ENCODE measurements at regions of chr2 and their contacts with region 1.

Region 1: DNA sequence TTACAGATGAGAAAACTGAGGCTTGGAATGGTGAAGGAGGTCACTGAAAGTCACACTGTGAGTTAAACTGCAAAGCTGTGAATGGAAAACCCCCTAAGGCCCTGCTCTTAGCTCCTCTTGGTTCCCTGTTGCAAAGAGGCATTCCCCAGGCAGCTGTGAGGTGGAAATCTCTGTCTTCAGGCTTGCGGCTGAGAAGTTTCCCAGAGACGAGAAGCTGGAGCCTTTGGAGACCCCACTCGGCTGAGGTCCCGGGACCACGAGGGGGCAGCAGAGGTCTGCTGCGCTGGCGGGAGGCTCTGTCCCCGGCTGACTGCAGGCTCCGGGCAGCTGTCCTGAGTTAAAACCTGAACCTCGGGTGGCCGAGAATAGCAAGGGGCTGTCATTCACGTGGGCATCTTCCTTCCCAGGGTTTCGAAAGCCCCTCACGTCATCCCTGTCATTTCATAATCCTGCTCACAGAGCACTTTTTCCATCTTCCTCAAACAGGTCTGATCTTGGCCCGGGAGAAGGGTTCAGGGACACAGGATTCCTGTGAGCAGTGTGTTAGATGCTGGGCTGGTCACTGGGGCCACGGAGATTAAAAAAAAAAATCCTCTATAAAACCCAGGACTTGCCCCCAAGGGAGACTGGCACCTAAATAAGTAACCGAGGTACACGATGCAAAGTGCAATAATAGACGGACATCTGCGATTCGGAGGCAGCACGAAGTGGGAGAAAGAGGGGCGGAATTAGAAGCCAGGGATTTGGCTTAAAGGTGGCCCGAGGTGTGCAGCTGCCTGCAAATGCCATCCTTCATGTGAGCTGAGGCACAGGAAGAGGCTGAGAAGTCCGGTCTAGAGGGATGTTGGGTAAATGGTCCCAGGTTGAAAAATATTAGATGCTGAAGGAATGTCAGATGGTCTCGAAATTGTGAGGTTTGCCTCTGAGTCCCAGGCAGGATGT is 24.6 kb upstream of the ATOH8 start:
- DNase-seq: peak; percentile 87 to 94 (median 93)
- H3K4me3 ChIP-seq: no peak overlapping the region
- H3K27ac ChIP-seq: no peak overlapping the region
- H3K4me1 ChIP-seq: no peaks in the 10 kb centered on the region
- H3K27me3 ChIP-seq: no peaks in the 10 kb centered on the region
- CTCF ChIP-seq: peak; percentile 92 to 94 (median 94)
- EP300 ChIP-seq: no peak
- POLR2A ChIP-seq: peak; percentile 20

Region 2: GRCh38 chr2:85741833-85742455 is 12.8 kb after region 1 on chr2:
- intact Hi-C with region 1: no loop called
- DNase-seq: peak; percentile 75 to 84 (median 78)
- H3K4me3 ChIP-seq: no peak overlapping the region
- H3K27ac ChIP-seq: peak overlapping the region; percentile 51 to 89
- H3K4me1 ChIP-seq: peaks cover 33% of the 10 kb centered on the region
- H3K27me3 ChIP-seq: no peaks in the 10 kb centered on the region
- CTCF ChIP-seq: no peak
- EP300 ChIP-seq: no peak
- POLR2A ChIP-seq: no peak

Region 3: DNA sequence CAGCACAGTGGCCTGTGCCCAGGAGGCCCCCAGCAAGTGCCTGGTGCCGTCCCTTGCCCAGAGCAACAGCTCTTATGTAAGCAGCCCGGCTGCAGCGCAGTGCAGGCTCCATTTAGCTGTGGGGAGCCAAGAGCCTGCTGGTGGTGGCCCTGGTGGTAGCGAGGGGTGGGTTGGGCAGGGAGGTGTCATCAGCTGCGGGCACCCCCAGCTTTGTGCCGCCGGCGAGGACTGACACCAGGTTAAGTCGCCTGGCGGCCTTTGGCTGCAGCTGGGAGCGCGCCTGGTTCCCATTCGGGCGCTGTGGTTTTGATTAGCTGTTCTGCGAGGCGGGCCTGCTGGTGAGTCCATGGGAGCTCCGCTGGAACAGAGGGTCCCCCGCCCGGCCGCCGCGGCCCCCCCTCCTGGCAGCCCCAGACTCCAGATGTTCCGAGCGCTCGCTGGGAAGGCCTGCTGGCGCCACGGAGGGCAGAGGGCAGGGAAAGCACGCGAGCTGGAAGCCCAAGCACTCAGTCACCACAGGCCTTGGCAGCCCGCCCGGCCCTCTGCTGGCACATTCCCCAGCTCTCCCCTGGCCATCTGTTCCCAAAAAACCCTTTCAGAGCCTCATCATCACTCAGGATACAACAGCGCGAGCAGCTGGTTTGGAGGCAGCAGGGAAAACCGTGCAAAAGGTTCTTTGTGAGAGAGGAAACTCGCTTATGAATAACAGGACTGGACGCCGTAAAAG is 43.0 kb after region 1 on chr2:
- intact Hi-C with region 1: loop called in 1 of 4 experiments (anchors 5 kb)
- DNase-seq: peak; percentile 99 to 100 (median 100)
- H3K4me3 ChIP-seq: peak overlapping the region; percentile 24
- H3K27ac ChIP-seq: peak overlapping the region; percentile 36 to 84
- H3K4me1 ChIP-seq: peaks cover 53% of the 10 kb centered on the region
- H3K27me3 ChIP-seq: no peaks in the 10 kb centered on the region
- CTCF ChIP-seq: peak in 2 of 3 donors; percentile 37 to 56
- EP300 ChIP-seq: peak; percentile 93
- POLR2A ChIP-seq: peak; percentile 22

Region 4: DNA sequence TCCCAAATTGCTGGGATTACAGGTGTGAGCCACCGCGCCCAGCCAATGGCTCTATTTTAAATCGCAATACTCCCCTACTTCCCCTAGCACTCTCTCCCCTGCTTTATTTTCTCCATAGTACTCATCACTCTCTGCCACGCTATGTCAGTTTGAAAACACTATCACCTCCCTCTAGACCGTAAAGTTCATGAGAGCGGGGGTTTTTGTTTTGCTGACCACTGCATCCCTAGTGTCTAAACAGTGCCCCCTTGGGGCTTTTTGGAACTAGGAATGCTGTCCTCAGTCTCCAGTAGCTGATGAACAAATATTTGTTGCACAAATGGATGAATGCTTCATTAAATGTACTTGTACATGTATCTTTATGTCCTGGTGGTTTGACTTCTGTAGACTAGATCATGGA is 68.8 kb after region 1 on chr2:
- intact Hi-C with region 1: loop called in 2 of 4 experiments (anchors 2 to 5 kb)
- DNase-seq: peak in 1 of 5 donors; percentile 43
- H3K4me3 ChIP-seq: no peak overlapping the region
- H3K27ac ChIP-seq: no peak overlapping the region
- H3K4me1 ChIP-seq: peaks cover 30% of the 10 kb centered on the region
- H3K27me3 ChIP-seq: no peaks in the 10 kb centered on the region
- CTCF ChIP-seq: peak in 1 of 3 donors; percentile 67
- EP300 ChIP-seq: no peak
- POLR2A ChIP-seq: no peak

Region 5: GRCh38 chr2:85813982-85814801 is 85.0 kb after region 1 on chr2:
- intact Hi-C with region 1: loop called (anchors 1 to 5 kb)
- DNase-seq: peak; percentile 90 to 94 (median 94)
- H3K4me3 ChIP-seq: no peak overlapping the region
- H3K27ac ChIP-seq: no peak overlapping the region
- H3K4me1 ChIP-seq: peaks cover 9% of the 10 kb centered on the region
- H3K27me3 ChIP-seq: no peaks in the 10 kb centered on the region
- CTCF ChIP-seq: peak; percentile 86 to 97 (median 96)
- EP300 ChIP-seq: no peak
- POLR2A ChIP-seq: no peak

Region 6: DNA sequence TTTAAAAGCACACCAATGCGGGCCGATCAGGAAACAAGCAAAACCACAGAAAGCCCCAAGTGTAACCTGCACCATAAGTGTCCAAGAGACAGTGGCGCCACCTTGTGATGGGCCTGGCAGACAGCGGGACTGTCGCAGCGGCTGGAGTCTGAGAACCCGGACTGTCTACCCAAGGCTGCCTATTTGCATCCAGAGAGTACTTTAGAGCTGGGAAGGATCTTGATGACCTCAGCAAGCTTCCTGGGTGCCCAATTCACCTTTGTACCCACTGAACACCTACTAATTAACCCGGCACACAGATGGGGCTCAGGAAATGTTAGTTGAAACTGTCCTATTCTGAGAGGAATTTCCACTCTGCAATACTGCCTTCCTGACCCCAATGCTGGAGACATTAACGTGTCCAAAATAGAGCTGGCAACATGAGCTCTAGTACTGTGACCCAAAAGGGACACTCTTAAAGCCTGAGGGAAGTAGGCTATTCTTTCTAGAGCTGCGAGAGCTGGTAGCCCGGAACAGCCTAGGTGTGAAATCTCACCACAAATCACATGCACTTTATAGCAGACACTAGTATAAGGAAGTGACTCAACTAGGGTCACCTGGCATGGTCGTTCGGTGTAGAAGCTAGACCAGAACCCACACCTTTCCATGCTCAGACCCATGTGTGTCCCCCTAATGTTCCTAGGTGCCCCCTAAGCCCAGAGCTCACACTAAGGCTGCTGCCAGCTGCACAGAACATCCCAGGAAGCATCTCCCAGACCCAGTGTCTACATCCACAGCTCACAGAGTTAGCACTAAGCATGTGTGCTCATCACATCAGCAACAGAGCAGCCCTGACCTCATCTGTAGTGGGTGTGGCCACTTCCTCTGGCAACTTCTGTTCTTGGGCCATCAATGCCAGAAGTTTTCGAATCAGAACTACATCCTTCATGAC is 351.1 kb after region 1 on chr2:
- intact Hi-C with region 1: loop called in 2 of 4 experiments (anchors 10 kb)
- DNase-seq: peak; percentile 79 to 88 (median 85)
- H3K4me3 ChIP-seq: no peak overlapping the region
- H3K27ac ChIP-seq: no peak overlapping the region
- H3K4me1 ChIP-seq: no peaks in the 10 kb centered on the region
- H3K27me3 ChIP-seq: no peaks in the 10 kb centered on the region
- CTCF ChIP-seq: peak; percentile 49 to 72 (median 71)
- EP300 ChIP-seq: no peak
- POLR2A ChIP-seq: no peak

Measured in ovary (tissue), 10 donors.